ENCODE measurements at regions of chr7 and their contacts with region 1.

Region 1: DNA sequence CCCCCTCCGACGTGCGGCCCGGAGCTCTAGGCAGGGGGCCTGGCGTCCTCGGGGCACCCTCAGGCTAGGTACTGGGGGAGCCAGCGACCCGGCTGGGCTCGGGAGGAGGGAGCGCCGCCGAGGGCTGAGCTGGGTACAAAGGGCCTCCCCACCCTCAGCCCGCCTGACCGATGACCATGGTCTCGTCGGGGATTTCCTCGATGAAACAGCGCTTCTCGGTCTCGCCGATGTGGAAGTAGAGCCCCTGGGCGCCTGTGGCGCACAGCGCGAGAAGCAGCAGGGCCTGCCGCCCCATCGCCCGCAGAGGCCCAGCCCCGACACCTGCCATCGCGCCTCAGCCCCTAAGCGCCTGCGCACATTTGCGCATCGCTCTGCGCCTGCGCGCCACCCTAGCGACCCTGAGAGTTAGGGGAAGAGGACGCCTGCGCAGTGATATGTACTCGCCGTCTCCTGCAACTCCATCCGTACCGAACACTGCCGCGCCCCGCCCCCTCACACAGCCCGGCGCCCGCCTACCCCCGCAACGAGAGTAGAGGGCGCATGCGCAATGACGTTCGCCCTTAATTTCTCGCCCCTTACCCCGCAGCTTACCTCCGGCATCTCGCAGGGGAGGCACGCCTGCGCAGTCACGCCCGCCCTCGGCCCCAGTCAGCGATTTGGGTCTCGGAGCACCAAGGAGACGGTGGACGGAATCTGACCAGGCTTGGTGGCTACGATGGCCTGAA is at the start of gene TMED4:
- DNase-seq: peak; percentile 100
- ATAC-seq: peak; percentile 97
- H3K4me3 Mint-ChIP-seq: peak within 1 kb of the TSS; percentile 93
- H3K27ac Mint-ChIP-seq: peak within 1 kb of the TSS; percentile 95
- H3K4me1 Mint-ChIP-seq: peaks cover 30% of the 10 kb centered on the region
- H3K27me3 Mint-ChIP-seq: no peaks in the 10 kb centered on the region
- CTCF ChIP-seq: no peak
- total RNA-seq, gene TMED4: 74.6 to 76.2 TPM

Region 2: DNA sequence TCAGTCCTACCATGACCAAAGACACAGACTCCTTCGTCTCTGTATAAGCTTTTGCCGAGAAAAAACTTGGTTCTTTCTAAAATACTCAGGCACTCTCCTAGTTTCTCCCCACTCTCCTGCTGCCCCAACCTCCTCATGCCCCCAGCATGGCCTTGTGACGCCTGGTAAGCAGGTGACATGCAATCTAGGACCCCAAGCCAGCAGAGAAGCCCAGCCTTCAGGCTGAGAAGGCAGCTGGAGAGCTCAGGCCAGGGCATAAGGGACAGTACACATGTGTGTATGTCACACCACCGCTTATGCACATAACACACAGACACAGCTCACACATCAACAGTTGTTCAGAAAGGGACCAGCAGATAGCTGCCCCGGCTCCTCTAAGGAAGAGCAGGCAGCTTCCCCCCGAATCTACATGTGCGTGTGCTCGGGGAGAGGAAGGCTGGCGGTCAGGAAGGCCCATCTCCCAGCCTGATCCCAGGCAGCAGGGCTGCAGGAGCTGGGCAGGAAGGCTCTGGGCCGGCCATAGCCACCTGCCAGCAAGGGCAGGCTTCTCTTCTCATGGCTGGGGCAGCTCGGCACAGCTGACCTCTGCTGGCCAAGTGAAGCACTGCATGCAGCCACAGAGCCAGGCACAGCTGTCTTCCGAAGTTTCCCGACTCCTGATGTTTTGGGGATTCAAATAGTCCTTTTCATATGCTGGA is 16.8 kb before region 1 on chr7:
- CTCF ChIA-PET with region 1: interaction called, 28 read pairs
- POLR2A ChIA-PET with region 1: interaction called, 32 read pairs
- intact Hi-C with region 1: no loop called
- DNase-seq: peak; percentile 70
- ATAC-seq: peak; percentile 96
- H3K4me3 Mint-ChIP-seq: no peak overlapping the region
- H3K27ac Mint-ChIP-seq: peak overlapping the region; percentile 17
- H3K4me1 Mint-ChIP-seq: peaks cover 14% of the 10 kb centered on the region
- H3K27me3 Mint-ChIP-seq: no peaks in the 10 kb centered on the region
- CTCF ChIP-seq: peak; percentile 98

Region 3: DNA sequence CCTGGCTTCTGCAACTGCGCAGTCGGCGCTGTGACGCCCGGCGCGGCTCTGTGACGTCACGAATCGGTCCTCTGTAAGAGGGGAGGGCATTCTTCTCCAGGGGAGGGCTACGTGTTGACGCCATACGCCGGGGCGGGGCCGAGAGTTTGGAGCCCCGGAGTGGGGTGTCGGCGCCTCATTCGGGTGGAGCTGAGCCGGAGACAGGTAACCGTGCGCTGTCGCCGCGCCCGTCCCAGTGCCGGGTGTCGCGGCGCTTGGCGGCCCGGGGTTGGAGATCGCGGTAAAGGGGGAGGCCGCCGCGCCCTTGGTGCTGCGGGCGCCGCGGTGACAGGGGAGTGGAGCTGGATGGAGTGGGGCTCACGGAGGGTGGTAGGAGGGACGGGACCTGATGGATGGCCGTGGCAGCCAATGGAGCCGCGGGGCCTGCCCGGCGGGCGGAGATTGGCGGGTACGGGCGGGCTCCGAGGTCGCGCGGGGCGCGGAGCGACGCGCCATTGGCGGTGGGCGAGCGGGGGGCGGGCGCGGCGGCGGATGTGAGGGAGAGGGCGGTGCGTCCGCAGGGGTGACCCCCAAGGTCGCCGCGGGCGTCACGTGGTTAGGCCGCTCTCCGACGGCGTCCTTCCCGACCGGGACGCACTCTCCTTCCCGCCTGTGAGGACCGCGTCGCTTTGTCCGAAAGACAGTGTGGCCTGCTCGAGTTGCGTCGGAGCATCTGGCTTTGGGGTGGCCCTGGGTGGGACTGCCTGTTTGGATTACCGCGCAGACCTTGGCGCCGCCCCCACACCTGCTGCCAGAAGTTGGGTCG is 24.6 kb after region 1 on chr7 and contains the start of gene OGDH:
- CTCF ChIA-PET with region 1: interaction called, 3 read pairs
- POLR2A ChIA-PET with region 1: interaction called, 19 read pairs
- intact Hi-C with region 1: no loop called
- DNase-seq: peak; percentile 100
- ATAC-seq: peak; percentile 97
- H3K4me3 Mint-ChIP-seq: peak within 1 kb of the TSS; percentile 92
- H3K27ac Mint-ChIP-seq: peak within 1 kb of the TSS; percentile 97
- H3K4me1 Mint-ChIP-seq: peaks cover 26% of the 10 kb centered on the region
- H3K27me3 Mint-ChIP-seq: no peaks in the 10 kb centered on the region
- CTCF ChIP-seq: no peak
- total RNA-seq, gene OGDH: 78.6 to 85.6 TPM

Region 4: GRCh38 chr7:44638611-44639557 is 56.8 kb after region 1 on chr7:
- CTCF ChIA-PET with region 1: interaction called, 4 read pairs
- POLR2A ChIA-PET with region 1: interaction called, 12 read pairs
- intact Hi-C with region 1: no loop called
- DNase-seq: peak; percentile 93
- ATAC-seq: peak; percentile 80
- H3K4me3 Mint-ChIP-seq: peak overlapping the region; percentile 71
- H3K27ac Mint-ChIP-seq: peak overlapping the region; percentile 100
- H3K4me1 Mint-ChIP-seq: peaks cover 68% of the 10 kb centered on the region
- H3K27me3 Mint-ChIP-seq: no peaks in the 10 kb centered on the region
- CTCF ChIP-seq: no peak

Region 5: DNA sequence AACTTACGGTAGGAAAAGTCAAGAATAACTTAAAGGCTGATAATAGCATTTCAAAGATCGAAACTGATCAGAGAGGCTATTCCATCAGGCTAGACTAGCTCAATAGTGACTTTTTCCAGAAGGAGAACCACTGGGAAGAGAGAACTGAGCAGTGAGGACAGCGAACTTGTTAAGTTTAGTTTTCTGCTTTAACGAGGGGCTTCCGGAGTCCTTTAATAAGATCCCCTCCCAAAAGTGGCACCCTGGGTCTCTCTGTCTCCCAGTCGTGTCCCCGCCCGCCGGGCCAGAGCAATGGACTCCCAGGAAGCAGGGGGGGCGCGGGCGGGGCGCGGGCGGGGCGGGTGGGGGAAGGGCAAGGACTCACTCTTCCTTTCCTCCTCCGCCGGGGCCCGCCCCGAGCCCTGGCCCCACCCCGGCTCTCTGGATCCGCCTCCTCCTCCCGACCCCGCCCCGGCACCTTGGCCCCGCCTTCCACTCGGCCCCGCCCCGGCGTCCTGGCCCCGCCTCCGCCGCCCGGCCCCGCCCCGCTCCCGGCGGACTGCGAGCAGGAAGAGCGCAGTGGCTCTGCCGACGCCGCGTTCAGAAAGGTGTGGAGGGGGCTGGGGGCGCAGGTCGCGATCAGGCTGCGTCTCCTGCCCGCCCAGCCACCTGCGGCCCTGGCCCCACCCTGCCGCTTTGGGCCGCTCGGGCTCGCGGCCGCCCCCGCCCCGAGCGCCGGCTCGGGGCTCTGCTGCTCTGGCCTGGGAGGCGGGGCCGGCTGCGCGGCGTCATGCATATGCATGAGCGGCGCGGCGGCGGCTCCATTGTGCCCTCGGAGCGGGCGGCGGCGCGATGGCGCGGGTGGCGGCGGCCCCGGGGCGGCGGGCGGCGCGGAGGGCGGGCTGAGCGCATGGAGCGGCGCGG is 166.3 kb after region 1 on chr7 and contains the start of gene ZMIZ2:
- CTCF ChIA-PET with region 1: interaction called, 3 read pairs
- POLR2A ChIA-PET with region 1: interaction called, 8 read pairs
- intact Hi-C with region 1: loop called (anchors 10 kb)
- DNase-seq: peak; percentile 92
- ATAC-seq: peak; percentile 93
- H3K4me3 Mint-ChIP-seq: peak within 1 kb of the TSS; percentile 83
- H3K27ac Mint-ChIP-seq: peak within 1 kb of the TSS; percentile 81
- H3K4me1 Mint-ChIP-seq: peaks cover 33% of the 10 kb centered on the region
- H3K27me3 Mint-ChIP-seq: no peaks in the 10 kb centered on the region
- CTCF ChIP-seq: no peak
- total RNA-seq, gene ZMIZ2: 131 to 134 TPM

Region 6: GRCh38 chr7:44797329-44798251 is 215.5 kb after region 1 on chr7:
- CTCF ChIA-PET with region 1: interaction called, 4 read pairs
- POLR2A ChIA-PET with region 1: interaction called, 18 read pairs
- intact Hi-C with region 1: no loop called
- DNase-seq: peak; percentile 91
- ATAC-seq: peak; percentile 63
- H3K4me3 Mint-ChIP-seq: peak overlapping the region; percentile 92
- H3K27ac Mint-ChIP-seq: peak overlapping the region; percentile 99
- H3K4me1 Mint-ChIP-seq: peaks cover 29% of the 10 kb centered on the region
- H3K27me3 Mint-ChIP-seq: no peaks in the 10 kb centered on the region
- CTCF ChIP-seq: peak; percentile 30

Region 7: DNA sequence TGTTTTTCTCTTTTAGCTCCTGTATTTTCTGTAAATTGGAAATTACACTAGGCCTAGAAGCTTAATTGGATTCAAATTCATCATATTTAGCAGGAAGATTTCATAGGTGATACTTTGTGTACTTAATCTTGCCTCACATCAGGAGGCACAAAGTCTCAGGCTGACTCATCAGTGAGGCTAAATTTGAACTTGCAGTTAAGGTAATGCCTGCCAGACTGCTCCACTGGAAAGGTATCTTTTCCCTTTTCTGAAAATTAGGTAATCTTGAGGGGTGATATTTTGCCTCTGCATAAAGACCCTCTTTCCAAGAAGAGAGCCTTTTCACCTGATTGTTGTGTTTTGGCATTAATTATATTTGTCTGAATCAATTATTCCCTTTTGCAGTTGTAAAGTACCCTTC is 229.0 kb after region 1 on chr7:
- CTCF ChIA-PET with region 1: no interaction called
- POLR2A ChIA-PET with region 1: no interaction called
- intact Hi-C with region 1: no loop called
- DNase-seq: no peak
- ATAC-seq: no peak
- H3K4me3 Mint-ChIP-seq: no peak overlapping the region
- H3K27ac Mint-ChIP-seq: no peak overlapping the region
- H3K4me1 Mint-ChIP-seq: no peaks in the 10 kb centered on the region
- H3K27me3 Mint-ChIP-seq: no peaks in the 10 kb centered on the region
- CTCF ChIP-seq: no peak

Region 8: GRCh38 chr7:44847508-44847920 is 265.5 kb after region 1 on chr7:
- CTCF ChIA-PET with region 1: interaction called, 5 read pairs
- POLR2A ChIA-PET with region 1: interaction called, 15 read pairs
- intact Hi-C with region 1: loop called (anchors 5 kb)
- DNase-seq: peak; percentile 88
- ATAC-seq: peak; percentile 69
- H3K4me3 Mint-ChIP-seq: peak overlapping the region; percentile 92
- H3K27ac Mint-ChIP-seq: peak overlapping the region; percentile 100
- H3K4me1 Mint-ChIP-seq: peaks cover 36% of the 10 kb centered on the region
- H3K27me3 Mint-ChIP-seq: no peaks in the 10 kb centered on the region
- CTCF ChIP-seq: peak; percentile 85

Measured in activated CD8-positive, alpha-beta T cell treated with anti-CD3 and anti-CD28 coated beads for 36 hours (primary cell).